CD14-positive monocyte (primary cell): ENCODE measurements at regions of chr9 and their contacts with region 1.

Region 1: GRCh38 chr9:21812946-21813568 is 10.6 kb downstream of the MTAP start:
- DNase-seq: peak; percentile 49 to 70 (median 69)
- H3K4me3 ChIP-seq: no peak overlapping the region
- H3K4me3 Mint-ChIP-seq: no peak overlapping the region
- H3K27ac ChIP-seq: no peak overlapping the region
- H3K27ac Mint-ChIP-seq: peak overlapping the region in 3 of 7 donors; percentile 15 to 72 (median 30)
- H3K4me1 ChIP-seq: peaks cover 28 to 34% of the 10 kb centered on the region in 2 donors
- H3K4me1 Mint-ChIP-seq: peaks cover 31% of the 10 kb centered on the region
- H3K27me3 ChIP-seq: no peaks in the 10 kb centered on the region
- H3K27me3 Mint-ChIP-seq: no peaks in the 10 kb centered on the region
- CTCF ChIP-seq: peak; percentile 86

Region 2: DNA sequence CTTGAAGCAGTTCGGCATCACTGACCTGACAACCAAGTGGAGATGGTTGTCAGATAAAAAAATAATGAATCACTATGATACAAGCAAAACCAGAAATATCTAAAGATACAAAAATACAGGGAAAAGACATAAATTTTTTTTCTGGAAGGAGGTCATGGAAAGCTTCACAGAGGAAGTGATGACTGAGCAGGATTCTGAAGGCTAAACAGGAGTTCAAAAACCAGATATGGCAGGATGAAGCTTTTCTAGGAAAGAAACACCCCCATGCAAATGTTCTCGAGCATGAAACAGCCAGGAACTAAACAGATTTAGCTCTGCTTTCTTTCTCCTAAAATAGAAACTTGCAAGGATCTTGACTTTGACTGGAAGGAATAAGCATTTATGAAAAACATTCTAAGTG is 270.3 kb before region 1 on chr9:
- intact Hi-C with region 1: no loop called
- DNase-seq: no peak
- H3K4me3 ChIP-seq: no peak overlapping the region
- H3K4me3 Mint-ChIP-seq: no peak overlapping the region
- H3K27ac ChIP-seq: no peak overlapping the region
- H3K27ac Mint-ChIP-seq: no peak overlapping the region
- H3K4me1 ChIP-seq: no peaks in the 10 kb centered on the region
- H3K4me1 Mint-ChIP-seq: no peaks in the 10 kb centered on the region
- H3K27me3 ChIP-seq: peaks cover 3% of the 10 kb centered on the region in 2 donors
- H3K27me3 Mint-ChIP-seq: peaks cover 0 to 7% (median 2%) of the 10 kb centered on the region in 3 donors
- CTCF ChIP-seq: no peak

Region 3: DNA sequence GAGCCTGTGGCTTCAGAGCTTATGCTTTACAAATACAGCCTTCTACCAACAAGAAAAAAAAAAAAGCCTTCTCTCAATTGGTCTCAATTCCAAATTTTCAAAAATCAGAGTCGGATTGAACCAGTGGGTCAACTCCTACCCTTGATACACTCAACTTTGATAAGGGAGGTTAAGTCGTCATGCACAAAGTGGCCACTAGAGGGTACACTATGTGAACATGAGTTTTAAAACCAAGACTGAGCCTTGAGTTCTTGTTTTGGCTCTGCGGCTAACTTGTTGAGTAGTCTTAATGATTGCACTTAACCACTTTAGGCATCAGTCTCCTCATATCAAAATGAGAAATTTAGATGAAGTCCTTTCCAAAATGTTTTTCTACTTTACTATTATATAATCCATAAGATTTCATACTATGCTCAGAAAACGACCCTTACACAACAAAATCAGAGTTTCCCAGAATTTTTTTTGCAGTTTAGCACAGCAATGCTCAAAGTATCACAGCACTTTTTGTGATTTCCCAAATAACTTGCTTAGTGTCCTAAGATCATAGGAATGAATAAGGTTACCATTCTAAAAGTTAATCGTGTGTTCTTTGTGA is 103.5 kb before region 1 on chr9:
- intact Hi-C with region 1: no loop called
- DNase-seq: peak; percentile 43 to 63 (median 56)
- H3K4me3 ChIP-seq: no peak overlapping the region
- H3K4me3 Mint-ChIP-seq: no peak overlapping the region
- H3K27ac ChIP-seq: no peak overlapping the region
- H3K27ac Mint-ChIP-seq: no peak overlapping the region
- H3K4me1 ChIP-seq: no peaks in the 10 kb centered on the region
- H3K4me1 Mint-ChIP-seq: no peaks in the 10 kb centered on the region
- H3K27me3 ChIP-seq: peaks cover 2 to 3% of the 10 kb centered on the region in 2 donors
- H3K27me3 Mint-ChIP-seq: peaks cover 6 to 7% (median 7%) of the 10 kb centered on the region in 3 donors
- CTCF ChIP-seq: peak; percentile 97

Region 4: GRCh38 chr9:21831961-21832509 is 19.0 kb after region 1 on chr9:
- intact Hi-C with region 1: loop called in 1 of 2 experiments (anchors 2 kb)
- DNase-seq: peak; percentile 83 to 98 (median 87)
- H3K4me3 ChIP-seq: no peak overlapping the region
- H3K4me3 Mint-ChIP-seq: peak overlapping the region in 1 of 2 donors; percentile 22
- H3K27ac ChIP-seq: peak overlapping the region in 1 of 2 donors; percentile 77
- H3K27ac Mint-ChIP-seq: peak overlapping the region; percentile 55 to 96 (median 90)
- H3K4me1 ChIP-seq: peaks cover 34% of the 10 kb centered on the region in 2 donors
- H3K4me1 Mint-ChIP-seq: peaks cover 44% of the 10 kb centered on the region
- H3K27me3 ChIP-seq: no peaks in the 10 kb centered on the region
- H3K27me3 Mint-ChIP-seq: no peaks in the 10 kb centered on the region
- CTCF ChIP-seq: no peak

Region 5: DNA sequence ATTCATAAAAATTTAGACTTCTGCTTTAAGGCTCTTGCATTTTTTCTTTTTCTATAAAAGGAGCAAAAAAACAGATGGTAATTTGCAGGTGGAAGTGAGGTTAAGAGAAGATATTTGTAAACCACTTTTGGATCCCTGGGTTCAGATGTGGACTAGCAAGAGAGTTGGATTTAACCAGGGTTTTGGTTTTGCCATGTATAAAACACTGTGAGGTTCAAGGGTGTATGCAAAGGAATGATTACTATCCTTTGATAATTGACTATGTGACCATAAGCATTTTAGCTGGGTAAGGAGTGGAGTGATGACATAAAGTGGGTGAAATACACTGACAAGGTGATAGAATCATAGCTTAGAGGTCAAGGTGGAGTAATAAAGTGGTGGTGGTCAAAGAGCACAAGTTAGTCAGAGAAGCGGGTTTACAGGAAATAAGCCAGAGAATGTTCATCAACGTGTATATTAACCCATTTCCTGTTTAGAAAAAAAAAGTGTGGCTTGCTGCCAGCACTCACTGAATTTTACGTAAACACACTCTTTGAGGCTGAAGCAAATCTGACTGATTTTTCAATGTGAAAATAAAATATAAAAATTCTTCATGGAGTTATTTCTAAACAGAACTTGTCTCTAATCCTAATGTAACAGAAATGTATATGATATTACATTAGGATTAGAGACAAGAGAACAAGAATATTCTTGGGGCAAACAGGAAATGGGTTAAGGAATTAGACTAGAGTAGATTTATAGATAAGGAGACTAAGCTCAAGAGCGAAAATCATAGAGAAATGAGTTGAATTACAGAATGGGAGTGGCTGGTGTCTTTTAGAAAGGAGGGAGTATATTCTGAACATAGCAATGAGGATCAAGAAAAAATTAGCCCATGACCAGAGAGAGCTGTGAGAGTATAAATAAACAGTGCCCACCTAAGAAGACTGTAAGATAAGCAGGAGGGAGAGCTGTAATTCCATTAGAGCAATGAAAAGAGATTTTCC is 106.6 kb after region 1 on chr9:
- intact Hi-C with region 1: no loop called
- DNase-seq: peak in 1 of 3 donors; percentile 17
- H3K4me3 ChIP-seq: no peak overlapping the region
- H3K4me3 Mint-ChIP-seq: no peak overlapping the region
- H3K27ac ChIP-seq: no peak overlapping the region
- H3K27ac Mint-ChIP-seq: peak overlapping the region in 1 of 7 donors; percentile 44
- H3K4me1 ChIP-seq: no peaks in the 10 kb centered on the region
- H3K4me1 Mint-ChIP-seq: peaks cover 8% of the 10 kb centered on the region
- H3K27me3 ChIP-seq: no peaks in the 10 kb centered on the region
- H3K27me3 Mint-ChIP-seq: peaks cover 0 to 1% (median 0%) of the 10 kb centered on the region in 3 donors
- CTCF ChIP-seq: no peak

Region 6: DNA sequence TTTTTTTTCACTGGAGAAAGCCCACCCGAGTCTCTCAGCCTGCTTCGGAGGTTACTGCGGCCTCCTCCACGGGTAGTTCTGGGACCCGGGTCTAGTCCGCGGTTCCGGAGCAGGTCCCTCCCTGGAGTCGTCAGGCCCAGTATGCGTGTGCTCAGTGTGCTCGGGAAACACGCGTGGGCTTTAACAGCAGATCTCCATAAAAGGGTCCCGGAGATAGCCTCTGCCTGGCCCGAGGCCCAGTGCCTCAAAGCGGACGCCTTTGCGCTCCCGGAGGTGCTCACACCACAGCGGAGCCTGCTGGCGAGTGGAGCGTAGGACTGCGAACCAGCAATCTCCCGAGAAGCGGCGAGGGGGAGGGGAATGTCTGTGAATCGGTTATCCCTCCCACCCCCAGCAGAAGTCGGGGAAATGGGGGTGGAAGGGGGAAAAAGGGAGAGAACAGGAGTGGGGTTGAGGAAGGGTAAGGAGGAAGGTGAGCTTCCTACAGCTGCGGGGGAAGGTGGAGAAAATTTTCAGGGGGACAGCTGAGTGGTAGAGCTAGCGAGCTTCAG is 152.4 kb after region 1 on chr9:
- intact Hi-C with region 1: loop called in 1 of 2 experiments (anchors 5 kb)
- DNase-seq: peak in 2 of 3 donors; percentile 40 to 70
- H3K4me3 ChIP-seq: peak overlapping the region; percentile 5 to 72 (median 29)
- H3K4me3 Mint-ChIP-seq: peak overlapping the region; percentile 71 to 90
- H3K27ac ChIP-seq: no peak overlapping the region
- H3K27ac Mint-ChIP-seq: peak overlapping the region in 4 of 7 donors; percentile 46 to 82 (median 52)
- H3K4me1 ChIP-seq: peaks cover 28 to 33% of the 10 kb centered on the region in 2 donors
- H3K4me1 Mint-ChIP-seq: peaks cover 49% of the 10 kb centered on the region
- H3K27me3 ChIP-seq: peaks cover 80 to 100% of the 10 kb centered on the region in 2 donors
- H3K27me3 Mint-ChIP-seq: peaks cover 81 to 92% (median 84%) of the 10 kb centered on the region in 3 donors
- CTCF ChIP-seq: peak; percentile 32

Region 7: DNA sequence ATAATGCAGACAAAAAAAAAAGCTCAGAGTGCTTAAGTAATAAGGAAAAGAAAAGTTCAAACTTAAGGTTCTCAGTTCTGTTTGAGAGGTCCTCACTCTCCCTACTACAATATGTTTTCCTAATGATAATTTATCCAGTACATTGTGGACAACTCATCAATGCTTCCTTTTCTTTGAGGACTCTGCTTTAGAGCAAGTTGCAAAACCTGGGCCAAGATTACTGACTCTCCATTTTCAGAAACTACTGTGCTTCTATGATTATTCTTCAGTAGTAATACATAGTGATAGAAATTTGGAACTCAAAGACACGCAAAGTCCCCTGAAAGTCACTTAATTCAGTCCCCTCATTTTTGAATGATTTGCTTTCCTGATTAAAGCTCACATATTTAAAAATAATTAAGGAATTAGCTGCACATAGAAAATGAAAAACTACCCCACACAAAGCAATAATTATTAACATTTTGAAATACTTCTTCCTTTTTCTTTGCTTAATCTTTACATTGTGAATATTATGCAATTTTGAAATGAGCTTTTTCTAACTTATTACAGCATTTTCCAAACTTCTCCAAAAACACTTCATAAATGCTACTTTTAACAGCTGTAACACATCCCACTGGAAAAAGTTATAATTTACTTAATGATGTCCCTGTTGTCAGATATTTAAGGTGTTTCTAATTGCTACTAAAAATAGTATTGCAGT is 170.0 kb after region 1 on chr9:
- intact Hi-C with region 1: no loop called
- DNase-seq: no peak
- H3K4me3 ChIP-seq: peak overlapping the region in 1 of 3 experiments; percentile 35
- H3K4me3 Mint-ChIP-seq: peak overlapping the region in 1 of 2 donors; percentile 64
- H3K27ac ChIP-seq: peak overlapping the region in 1 of 2 donors; percentile 68
- H3K27ac Mint-ChIP-seq: peak overlapping the region; percentile 6 to 92 (median 80)
- H3K4me1 ChIP-seq: peaks cover 17 to 42% of the 10 kb centered on the region in 2 donors
- H3K4me1 Mint-ChIP-seq: peaks cover 38% of the 10 kb centered on the region
- H3K27me3 ChIP-seq: peaks cover 49 to 70% of the 10 kb centered on the region in 2 donors
- H3K27me3 Mint-ChIP-seq: peaks cover 29 to 42% (median 41%) of the 10 kb centered on the region in 3 donors
- CTCF ChIP-seq: no peak

Region 8: DNA sequence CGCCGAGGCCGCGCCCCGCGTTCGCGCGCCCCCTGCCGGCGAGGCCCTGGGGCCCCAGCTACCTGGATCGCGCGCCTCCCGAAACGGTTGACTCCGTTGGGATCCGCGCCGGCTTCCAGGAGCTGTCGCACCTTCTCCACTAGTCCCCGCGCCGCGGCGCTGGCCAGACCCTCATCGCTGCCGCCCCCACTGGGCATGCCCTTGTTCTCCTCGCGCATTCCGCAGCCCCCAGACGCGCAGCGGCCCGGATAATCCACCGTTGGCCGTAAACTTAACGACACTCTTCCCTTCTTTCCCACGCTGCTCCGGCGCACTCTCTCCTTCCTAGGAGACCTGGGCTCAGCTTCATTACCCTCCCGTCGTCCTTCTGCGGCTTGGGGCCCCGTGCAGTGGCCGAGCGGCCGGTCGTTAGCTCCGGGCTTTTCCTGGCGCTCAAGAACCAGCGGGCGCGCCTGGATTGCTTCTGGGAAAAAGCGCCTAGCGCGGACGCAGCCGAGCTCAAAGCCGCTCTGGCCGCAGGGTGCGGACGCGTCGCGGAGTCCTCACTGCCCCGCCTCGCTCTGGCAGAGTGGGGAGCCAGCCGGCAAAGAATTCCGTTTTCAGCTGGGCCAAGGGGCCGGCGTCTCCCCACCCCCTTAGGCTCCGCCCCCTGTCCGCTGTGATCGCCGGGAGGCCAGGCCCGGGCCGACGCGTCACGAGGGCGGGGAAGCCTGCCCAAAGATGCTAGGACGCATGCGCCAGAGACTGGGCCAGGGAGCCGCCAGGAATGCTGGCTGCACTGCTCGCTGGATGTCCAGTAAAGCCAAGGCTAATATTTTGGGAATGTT is 195.9 kb after region 1 on chr9 and contains the start of gene CDKN2B:
- intact Hi-C with region 1: loop called in 1 of 2 experiments (anchors 5 kb)
- DNase-seq: peak; percentile 88 to 92 (median 89)
- H3K4me3 ChIP-seq: peak within 1 kb of the TSS; percentile 78 to 99 (median 97)
- H3K4me3 Mint-ChIP-seq: peak within 1 kb of the TSS; percentile 95 to 96
- H3K27ac ChIP-seq: peak within 1 kb of the TSS; percentile 68 to 81
- H3K27ac Mint-ChIP-seq: peak within 1 kb of the TSS; percentile 72 to 97 (median 94)
- H3K4me1 ChIP-seq: peaks cover 22 to 35% of the 10 kb centered on the region in 2 donors
- H3K4me1 Mint-ChIP-seq: peaks cover 38% of the 10 kb centered on the region
- H3K27me3 ChIP-seq: peaks cover 66 to 88% of the 10 kb centered on the region in 2 donors
- H3K27me3 Mint-ChIP-seq: peaks cover 60 to 82% (median 71%) of the 10 kb centered on the region in 3 donors
- CTCF ChIP-seq: peak; percentile 99
- polyA plus RNA-seq, gene CDKN2B: 1.2 to 6.7 (median 2.7) TPM

Region 9: GRCh38 chr9:22158927-22159346 is 345.9 kb after region 1 on chr9:
- intact Hi-C with region 1: loop called in 1 of 2 experiments (anchors 10 kb)
- DNase-seq: peak; percentile 61 to 77 (median 75)
- H3K4me3 ChIP-seq: peak overlapping the region in 1 of 3 experiments; percentile 53
- H3K4me3 Mint-ChIP-seq: peak overlapping the region in 1 of 2 donors; percentile 62
- H3K27ac ChIP-seq: peak overlapping the region; percentile 28 to 88
- H3K27ac Mint-ChIP-seq: peak overlapping the region; percentile 83 to 94 (median 92)
- H3K4me1 ChIP-seq: peaks cover 39 to 42% of the 10 kb centered on the region in 2 donors
- H3K4me1 Mint-ChIP-seq: peaks cover 43% of the 10 kb centered on the region
- H3K27me3 ChIP-seq: no peaks in the 10 kb centered on the region
- H3K27me3 Mint-ChIP-seq: peaks cover 0 to 5% (median 3%) of the 10 kb centered on the region in 3 donors
- CTCF ChIP-seq: no peak

Region 10: DNA sequence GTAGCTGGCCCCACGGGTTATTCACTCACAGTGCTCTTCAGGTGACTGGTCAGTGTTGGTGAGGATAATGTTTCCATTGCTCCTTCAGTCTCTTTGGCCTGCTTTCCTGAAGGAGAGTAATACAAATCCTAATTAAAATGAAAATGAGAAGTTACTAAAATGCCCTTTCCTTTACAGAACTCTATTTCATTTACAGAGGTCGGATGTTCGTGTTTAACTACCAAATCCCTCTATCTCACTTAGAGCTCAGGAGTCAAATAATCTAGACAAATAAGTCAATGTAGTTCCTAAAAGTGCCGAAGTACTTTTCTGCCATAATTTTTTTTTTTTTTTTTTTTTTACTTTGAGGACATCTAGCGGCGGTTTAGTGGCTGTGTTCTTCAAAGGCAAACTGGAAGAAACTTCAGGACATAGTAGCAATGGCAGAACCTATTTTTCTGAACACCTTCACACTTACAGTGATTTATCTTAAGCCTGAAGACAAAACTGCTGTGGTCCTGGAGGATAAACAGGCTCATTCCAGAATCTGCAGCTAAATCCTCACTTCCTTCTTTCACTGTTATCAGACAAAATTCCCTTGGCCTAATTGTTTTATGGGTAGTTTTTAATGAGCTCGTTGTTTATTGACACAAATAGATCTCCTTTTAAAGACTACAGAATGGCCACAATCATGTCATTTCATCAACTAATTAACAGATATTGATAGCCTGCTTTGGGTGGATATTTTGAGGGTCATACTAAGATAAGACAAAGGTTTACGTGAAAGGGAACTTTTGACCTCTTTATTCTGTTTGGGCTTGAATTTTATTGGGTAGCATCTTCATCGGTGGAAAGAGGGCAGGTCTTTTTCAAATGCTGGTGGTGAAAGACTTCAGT is 426.0 kb after region 1 on chr9:
- intact Hi-C with region 1: loop called in 1 of 2 experiments (anchors 5 kb)
- DNase-seq: peak in 1 of 3 donors; percentile 27
- H3K4me3 ChIP-seq: no peak overlapping the region
- H3K4me3 Mint-ChIP-seq: no peak overlapping the region
- H3K27ac ChIP-seq: no peak overlapping the region
- H3K27ac Mint-ChIP-seq: peak overlapping the region in 1 of 7 donors; percentile 33
- H3K4me1 ChIP-seq: peaks cover 19 to 31% of the 10 kb centered on the region in 2 donors
- H3K4me1 Mint-ChIP-seq: peaks cover 25% of the 10 kb centered on the region
- H3K27me3 ChIP-seq: peaks cover 0 to 3% of the 10 kb centered on the region in 2 donors
- H3K27me3 Mint-ChIP-seq: peaks cover 6 to 12% (median 6%) of the 10 kb centered on the region in 3 donors
- CTCF ChIP-seq: peak; percentile 70

Region 11: GRCh38 chr9:22452415-22453010 is 639.5 kb after region 1 on chr9:
- intact Hi-C with region 1: loop called (anchors 5 kb)
- DNase-seq: peak; percentile 17 to 54 (median 34)
- H3K4me3 ChIP-seq: no peak overlapping the region
- H3K4me3 Mint-ChIP-seq: no peak overlapping the region
- H3K27ac ChIP-seq: no peak overlapping the region
- H3K27ac Mint-ChIP-seq: no peak overlapping the region
- H3K4me1 ChIP-seq: peaks cover 0 to 3% of the 10 kb centered on the region in 2 donors
- H3K4me1 Mint-ChIP-seq: peaks cover 3% of the 10 kb centered on the region
- H3K27me3 ChIP-seq: peaks cover 24 to 29% of the 10 kb centered on the region in 2 donors
- H3K27me3 Mint-ChIP-seq: peaks cover 19 to 23% (median 20%) of the 10 kb centered on the region in 3 donors
- CTCF ChIP-seq: peak; percentile 85